ENCODE measurements at regions of chr4 and their contacts with region 1.

Region 1: GRCh38 chr4:48779998-48780742 is at the start of gene FRYL:
- DNase-seq: peak; percentile 100
- H3K4me3 Mint-ChIP-seq: peak within 1 kb of the TSS; percentile 92
- H3K27ac Mint-ChIP-seq: peak within 1 kb of the TSS; percentile 98
- H3K4me1 Mint-ChIP-seq: peaks cover 41% of the 10 kb centered on the region
- H3K27me3 Mint-ChIP-seq: no peaks in the 10 kb centered on the region
- total RNA-seq, gene FRYL: 44.8 to 54.2 TPM

Region 2: GRCh38 chr4:48269861-48270522 is 510.2 kb before region 1 on chr4:
- CTCF ChIA-PET with region 1: no interaction called
- intact Hi-C with region 1: loop called (anchors 1 kb)
- DNase-seq: peak; percentile 93
- H3K4me3 Mint-ChIP-seq: peak overlapping the region; percentile 93
- H3K27ac Mint-ChIP-seq: peak overlapping the region; percentile 83
- H3K4me1 Mint-ChIP-seq: peaks cover 9% of the 10 kb centered on the region
- H3K27me3 Mint-ChIP-seq: no peaks in the 10 kb centered on the region

Region 3: GRCh38 chr4:48578132-48578968 is 201.8 kb before region 1 on chr4:
- CTCF ChIA-PET with region 1: interaction called, 22 read pairs
- intact Hi-C with region 1: loop called (anchors 1 kb)
- DNase-seq: peak; percentile 72
- H3K4me3 Mint-ChIP-seq: no peak overlapping the region
- H3K27ac Mint-ChIP-seq: no peak overlapping the region
- H3K4me1 Mint-ChIP-seq: peaks cover 7% of the 10 kb centered on the region
- H3K27me3 Mint-ChIP-seq: no peaks in the 10 kb centered on the region

Region 4: GRCh38 chr4:48698029-48698971 is 81.9 kb before region 1 on chr4:
- CTCF ChIA-PET with region 1: no interaction called
- intact Hi-C with region 1: loop called (anchors 1 kb)
- DNase-seq: no peak
- H3K4me3 Mint-ChIP-seq: no peak overlapping the region
- H3K27ac Mint-ChIP-seq: no peak overlapping the region
- H3K4me1 Mint-ChIP-seq: peaks cover 55% of the 10 kb centered on the region
- H3K27me3 Mint-ChIP-seq: no peaks in the 10 kb centered on the region

Region 5: DNA sequence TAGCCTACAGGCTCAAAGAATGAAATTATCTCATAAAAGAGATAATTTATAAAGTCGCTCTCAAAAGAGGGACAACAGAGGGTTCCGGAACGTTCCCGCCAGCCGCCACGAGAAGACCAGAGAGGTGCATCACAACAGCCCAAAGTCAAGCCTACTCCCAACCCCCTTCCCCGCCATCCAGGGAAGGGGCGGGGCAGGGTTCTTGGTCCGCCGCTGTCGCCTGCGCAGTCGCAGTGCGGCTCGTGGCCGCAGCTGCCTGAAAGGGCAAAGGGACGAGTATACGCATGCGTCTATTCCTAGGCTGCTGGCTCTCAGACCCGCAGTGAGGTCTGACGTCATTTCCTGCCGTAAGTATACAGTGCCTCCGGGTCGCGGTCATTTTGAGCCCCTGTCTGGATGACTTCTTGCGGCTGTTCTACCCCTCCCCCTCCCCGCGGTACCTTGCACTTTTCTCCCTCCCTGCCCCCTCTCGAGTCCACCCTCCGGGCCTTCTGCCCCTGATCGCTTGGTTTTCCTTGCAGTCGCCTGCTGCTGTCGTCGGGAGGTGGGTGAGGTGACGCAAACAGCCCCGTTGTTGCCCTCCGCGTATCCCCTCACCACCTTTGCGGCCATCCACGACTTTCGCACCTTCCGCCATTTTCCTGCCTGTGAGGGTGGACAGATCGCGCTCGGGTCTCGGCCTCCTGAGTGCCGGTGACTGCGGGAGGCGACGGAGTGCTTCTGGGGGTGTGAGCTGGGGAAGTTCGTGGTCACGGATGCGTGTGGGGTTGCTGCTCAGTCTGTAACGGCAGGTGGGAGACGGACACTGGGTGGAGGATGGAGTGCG is 50.7 kb after region 1 on chr4 and contains the start of gene OCIAD1:
- CTCF ChIA-PET with region 1: interaction called, 5 read pairs
- intact Hi-C with region 1: loop called (anchors 1 kb)
- DNase-seq: peak; percentile 96
- H3K4me3 Mint-ChIP-seq: peak within 1 kb of the TSS; percentile 100
- H3K27ac Mint-ChIP-seq: peak within 1 kb of the TSS; percentile 100
- H3K4me1 Mint-ChIP-seq: peaks cover 23% of the 10 kb centered on the region
- H3K27me3 Mint-ChIP-seq: peaks cover 6% of the 10 kb centered on the region
- total RNA-seq, gene OCIAD1: 91.9 to 99.0 TPM

Region 6: DNA sequence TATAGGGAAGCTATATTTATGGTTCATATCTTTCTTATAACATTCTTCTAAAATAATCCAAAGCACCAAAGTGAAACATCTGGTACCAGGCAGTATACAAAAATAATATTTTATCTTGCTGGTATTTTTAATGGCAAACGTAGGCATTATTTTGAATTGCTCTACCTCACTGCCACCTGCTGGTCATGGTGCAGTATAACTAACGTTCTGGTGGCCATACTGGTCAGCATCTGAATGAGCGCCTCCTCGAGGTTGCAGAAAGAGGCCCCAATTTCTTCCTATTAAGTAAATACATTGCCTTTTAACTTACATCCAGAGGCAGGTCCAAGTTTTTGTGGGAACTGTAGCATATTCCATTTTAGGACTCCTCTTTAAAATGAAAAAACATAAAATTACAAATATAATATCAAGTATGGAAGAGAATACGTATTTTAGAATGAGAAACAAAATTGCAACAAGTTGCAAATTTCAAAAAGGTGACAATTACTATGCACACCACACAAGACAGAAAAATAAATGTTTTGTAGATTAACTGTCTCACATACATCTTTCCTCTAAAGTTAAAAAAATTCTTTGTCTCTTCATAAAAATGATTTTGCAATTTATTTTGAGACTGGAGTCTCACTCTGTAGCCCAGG is 183.0 kb after region 1 on chr4:
- CTCF ChIA-PET with region 1: no interaction called
- intact Hi-C with region 1: loop called (anchors 1 kb)
- DNase-seq: peak; percentile 89
- H3K4me3 Mint-ChIP-seq: no peak overlapping the region
- H3K27ac Mint-ChIP-seq: no peak overlapping the region
- H3K4me1 Mint-ChIP-seq: no peaks in the 10 kb centered on the region
- H3K27me3 Mint-ChIP-seq: no peaks in the 10 kb centered on the region

Measured in activated naive CD4-positive, alpha-beta T cell treated with anti-CD3 and anti-CD28 coated beads for 36 hours (primary cell).